RWPE1 (cell line): ENCODE measurements at regions of chr10 and their contacts with region 1.

Region 1: DNA sequence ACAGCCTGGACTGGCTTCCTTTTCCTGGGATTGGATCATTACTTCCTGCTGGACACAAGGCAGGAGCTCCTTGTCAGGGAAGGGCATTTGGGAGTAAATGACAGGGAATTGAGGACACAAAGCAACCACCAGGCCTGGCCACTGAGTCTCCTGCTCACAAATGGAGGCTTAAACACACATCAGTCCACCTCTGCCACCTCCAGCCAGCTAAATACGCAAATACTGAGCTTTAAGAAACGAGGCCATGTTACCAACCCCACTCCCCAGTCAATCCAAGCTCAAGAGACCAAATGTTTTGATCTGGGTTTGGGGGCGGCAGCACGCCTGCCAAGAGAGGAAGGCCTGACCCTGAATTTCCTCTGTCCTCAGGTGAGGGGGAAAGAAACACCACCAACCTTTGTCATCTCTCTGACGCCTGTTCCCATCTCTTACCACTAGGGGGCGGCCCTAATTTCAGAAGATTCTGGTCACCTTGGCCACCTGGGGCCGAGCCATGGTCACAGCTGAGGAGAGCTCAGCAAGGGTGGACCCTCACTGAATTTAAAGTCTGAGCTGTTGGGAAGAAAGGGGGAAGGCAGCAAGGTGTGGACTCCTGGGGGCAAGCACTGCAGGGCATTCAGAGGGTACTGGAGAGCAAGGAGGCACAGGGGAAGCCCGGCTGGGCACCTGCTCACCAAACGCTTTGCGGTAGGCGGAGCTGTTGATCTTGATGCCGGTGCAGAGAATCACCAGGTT is 16.5 kb downstream of the AIFM2 start:
- DNase-seq: peak; percentile 76
- H3K27ac ChIP-seq: 0 out of 2 replicates have a peak overlapping the region, but pooled peaks have one; percentile 3
- CTCF ChIP-seq: peak; percentile 92

Region 2: GRCh38 chr10:69742928-69743602 is 373.1 kb before region 1 on chr10:
- CTCF ChIA-PET with region 1: no interaction called
- POLR2A ChIA-PET with region 1: no interaction called
- DNase-seq: no peak
- H3K27ac ChIP-seq: no peak overlapping the region
- CTCF ChIP-seq: no peak

Region 3: DNA sequence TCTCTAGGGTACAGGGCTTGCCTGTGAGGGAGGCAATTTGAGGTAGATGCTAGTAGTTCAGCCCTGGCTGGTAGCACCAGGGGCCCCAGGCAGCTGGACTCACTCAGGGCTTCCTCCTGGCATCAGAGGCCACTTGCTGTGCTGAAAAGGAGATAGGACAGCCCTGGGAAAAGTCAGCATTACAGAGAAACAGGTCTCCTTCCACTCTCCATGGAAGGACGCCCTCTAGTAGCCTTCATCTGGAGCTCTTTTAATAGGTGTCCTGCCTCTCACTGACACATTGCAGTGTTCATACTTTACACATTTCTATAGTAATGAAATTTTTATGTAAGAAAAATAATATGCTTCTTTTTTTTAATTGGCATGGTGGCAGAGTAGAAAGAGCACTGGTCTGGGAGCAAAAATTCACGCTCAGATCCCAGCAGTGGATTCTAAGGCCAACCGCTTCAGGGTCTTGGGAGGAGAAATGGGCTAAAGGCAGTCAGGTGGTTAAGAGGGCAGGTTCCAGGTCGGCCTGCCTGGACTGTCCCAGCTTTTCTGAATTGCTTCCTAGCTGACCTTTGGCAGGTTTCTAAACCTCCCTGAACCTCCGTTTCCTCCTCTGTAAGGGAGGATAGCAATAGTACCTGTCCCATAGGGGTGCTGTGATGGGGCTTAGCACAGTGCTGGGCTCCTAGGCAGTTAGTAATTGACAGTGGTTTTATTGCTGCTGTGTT is 19.3 kb before region 1 on chr10:
- CTCF ChIA-PET with region 1: interaction called, 12 read pairs
- POLR2A ChIA-PET with region 1: no interaction called
- DNase-seq: no peak
- H3K27ac ChIP-seq: no peak overlapping the region
- CTCF ChIP-seq: no peak

Region 4: GRCh38 chr10:70130878-70131559 is 14.9 kb after region 1 on chr10:
- CTCF ChIA-PET with region 1: interaction called, 22 read pairs
- POLR2A ChIA-PET with region 1: no interaction called
- DNase-seq: no peak
- H3K27ac ChIP-seq: peak overlapping the region; percentile 80
- CTCF ChIP-seq: no peak

Region 5: DNA sequence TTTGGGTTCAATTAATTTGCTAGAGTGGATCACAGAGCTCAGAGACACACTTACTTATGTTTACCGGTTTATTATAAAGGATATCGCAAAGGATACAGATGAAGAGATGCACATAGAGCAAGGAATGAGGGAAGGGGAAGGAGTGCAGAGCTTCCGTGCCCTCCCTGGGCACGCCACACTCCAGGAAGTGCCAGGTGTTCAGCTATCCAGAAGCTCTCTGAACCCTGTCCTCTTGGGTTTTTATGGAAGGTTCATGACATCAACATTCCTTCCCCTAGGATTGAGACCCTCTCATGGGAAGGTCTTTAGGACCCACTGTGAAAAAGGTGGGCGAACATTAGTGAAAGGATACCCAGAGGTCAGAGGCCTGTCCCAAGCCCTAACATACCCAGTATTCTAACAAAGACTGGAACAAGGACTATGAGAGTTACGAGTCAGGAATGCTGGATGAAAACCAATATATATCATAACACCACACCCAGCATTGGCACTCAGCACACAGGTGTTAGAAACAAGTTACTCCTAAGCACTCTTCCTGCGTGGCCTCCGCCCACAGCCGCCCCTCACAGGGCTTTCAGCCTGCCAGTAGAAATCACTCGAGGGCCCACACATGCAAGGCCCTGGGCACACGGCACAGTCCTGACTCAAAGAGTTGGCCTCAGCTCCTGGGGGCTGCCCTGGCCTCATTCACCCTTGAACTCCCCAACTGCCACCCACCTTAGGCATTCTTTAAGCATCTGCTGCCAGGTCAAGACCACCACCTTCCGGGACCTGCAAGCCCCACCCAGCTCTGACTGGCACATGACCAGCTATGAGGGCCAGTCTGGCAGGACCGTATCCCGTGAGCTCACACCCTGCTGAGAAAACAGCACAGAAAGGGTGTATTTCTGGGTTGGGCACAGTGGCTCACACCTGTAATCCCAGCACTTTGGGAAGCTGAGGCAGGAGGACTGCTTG is 22.1 kb after region 1 on chr10:
- CTCF ChIA-PET with region 1: interaction called, 13 read pairs
- POLR2A ChIA-PET with region 1: no interaction called
- DNase-seq: peak; percentile 70
- H3K27ac ChIP-seq: peak overlapping the region; percentile 78
- CTCF ChIP-seq: no peak

Region 6: GRCh38 chr10:70146489-70147258 is 30.6 kb after region 1 on chr10 and contains the start of gene TYSND1:
- CTCF ChIA-PET with region 1: interaction called, 42 read pairs
- POLR2A ChIA-PET with region 1: no interaction called
- DNase-seq: peak; percentile 100
- H3K27ac ChIP-seq: peak within 1 kb of the TSS; percentile 95
- CTCF ChIP-seq: peak; percentile 87